ENCODE measurements at regions of chr9 and their contacts with region 1.

Region 1: DNA sequence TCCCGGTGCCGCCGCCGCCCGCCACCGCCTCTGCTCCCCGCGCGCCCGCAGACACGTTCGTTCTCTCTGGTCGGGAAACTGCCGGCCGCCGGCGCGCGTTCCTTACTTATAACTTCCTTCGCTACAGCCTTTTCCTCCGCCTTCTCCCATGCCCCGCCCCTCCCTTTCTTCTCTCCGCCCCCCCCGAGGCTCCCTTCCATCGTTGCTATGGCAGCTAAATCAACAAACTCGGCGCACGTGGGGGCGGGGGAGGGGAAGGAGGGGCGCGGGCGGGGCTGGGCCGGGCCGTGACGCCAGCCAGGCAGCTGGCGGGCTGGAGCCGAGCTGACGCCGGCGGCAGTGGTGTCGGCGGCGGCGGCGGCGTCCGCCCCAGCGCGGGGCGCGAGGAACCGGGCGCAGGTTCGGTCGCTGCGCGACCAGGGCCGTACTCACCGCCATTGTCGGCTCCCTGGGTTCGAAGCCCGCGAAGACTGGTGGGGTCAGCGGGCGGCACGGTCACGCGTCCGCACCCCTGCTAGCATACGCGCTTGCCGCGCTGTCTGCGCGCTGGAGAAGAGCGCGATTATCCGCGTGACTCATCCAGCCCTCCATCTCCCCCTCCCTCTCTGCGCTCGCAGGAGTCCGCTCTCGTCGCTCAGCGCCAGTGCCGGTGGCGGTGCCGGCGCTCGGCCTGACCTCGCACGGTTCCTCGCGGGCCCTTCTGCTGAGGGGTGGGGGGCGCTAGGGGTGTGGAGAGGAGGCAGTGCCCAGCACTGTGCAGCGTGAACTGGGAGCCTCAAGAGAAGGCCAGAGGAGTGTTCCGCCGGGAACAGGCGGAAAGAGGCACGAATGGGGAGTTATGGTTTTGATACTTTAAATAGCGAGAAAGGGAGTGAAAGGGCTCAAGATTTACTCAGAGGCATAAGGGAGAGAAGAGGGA is at the start of gene KLF4:
- DNase-seq: peak; percentile 90 to 94
- ATAC-seq: peak; percentile 76 to 94 (median 84)
- H3K4me3 ChIP-seq: peak within 1 kb of the TSS; percentile 60 to 94 (median 80)
- H3K27ac ChIP-seq: peak within 1 kb of the TSS; percentile 86 to 98 (median 96)
- H3K4me1 ChIP-seq: peaks cover 3 to 64% (median 19%) of the 10 kb centered on the region in 9 donors
- H3K27me3 ChIP-seq: peaks cover 0 to 48% (median 0%) of the 10 kb centered on the region in 7 donors
- CTCF ChIP-seq: peak in 1 of 9 donors; percentile 16
- total RNA-seq, gene KLF4: 16.7 to 62.2 (median 31.0) TPM

Region 2: DNA sequence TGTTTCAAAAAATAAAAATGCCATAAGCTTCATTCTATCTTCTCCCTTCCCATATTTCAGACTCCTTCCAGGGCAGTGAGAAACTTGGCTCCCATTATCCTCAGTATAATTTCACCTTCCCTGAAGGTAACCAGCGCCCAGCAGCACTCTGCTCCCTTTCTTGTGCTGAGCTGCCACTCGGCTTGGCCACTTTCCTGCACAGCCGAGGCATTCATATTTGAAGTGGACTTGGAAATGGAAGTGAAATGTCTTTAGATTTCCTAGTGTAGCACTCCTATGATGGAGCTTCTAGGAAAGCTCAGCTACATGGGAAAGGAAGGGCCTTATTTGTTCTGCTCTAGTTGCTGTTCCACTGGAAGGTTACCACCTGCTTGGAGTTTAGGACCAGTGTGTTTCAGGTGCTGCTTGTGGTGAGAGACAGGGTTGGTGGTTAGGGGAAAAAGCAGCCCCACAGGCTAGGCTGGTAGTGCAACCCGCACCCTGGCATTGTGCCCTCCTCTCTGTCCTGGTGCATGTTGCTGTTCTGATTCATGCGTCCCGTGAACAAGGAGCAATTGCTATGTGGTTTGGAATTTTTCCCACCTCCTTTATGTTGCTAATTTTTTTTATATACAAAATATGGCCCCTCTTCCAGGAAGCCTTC is 153.1 kb before region 1 on chr9:
- intact Hi-C with region 1: no loop called
- DNase-seq: no peak
- ATAC-seq: peak in 3 of 8 donors; percentile 17 to 48 (median 30)
- H3K4me3 ChIP-seq: no peak overlapping the region
- H3K27ac ChIP-seq: no peak overlapping the region
- H3K4me1 ChIP-seq: peaks cover 0 to 28% (median 15%) of the 10 kb centered on the region in 9 donors
- H3K27me3 ChIP-seq: no peaks in the 10 kb centered on the region
- CTCF ChIP-seq: no peak

Region 3: DNA sequence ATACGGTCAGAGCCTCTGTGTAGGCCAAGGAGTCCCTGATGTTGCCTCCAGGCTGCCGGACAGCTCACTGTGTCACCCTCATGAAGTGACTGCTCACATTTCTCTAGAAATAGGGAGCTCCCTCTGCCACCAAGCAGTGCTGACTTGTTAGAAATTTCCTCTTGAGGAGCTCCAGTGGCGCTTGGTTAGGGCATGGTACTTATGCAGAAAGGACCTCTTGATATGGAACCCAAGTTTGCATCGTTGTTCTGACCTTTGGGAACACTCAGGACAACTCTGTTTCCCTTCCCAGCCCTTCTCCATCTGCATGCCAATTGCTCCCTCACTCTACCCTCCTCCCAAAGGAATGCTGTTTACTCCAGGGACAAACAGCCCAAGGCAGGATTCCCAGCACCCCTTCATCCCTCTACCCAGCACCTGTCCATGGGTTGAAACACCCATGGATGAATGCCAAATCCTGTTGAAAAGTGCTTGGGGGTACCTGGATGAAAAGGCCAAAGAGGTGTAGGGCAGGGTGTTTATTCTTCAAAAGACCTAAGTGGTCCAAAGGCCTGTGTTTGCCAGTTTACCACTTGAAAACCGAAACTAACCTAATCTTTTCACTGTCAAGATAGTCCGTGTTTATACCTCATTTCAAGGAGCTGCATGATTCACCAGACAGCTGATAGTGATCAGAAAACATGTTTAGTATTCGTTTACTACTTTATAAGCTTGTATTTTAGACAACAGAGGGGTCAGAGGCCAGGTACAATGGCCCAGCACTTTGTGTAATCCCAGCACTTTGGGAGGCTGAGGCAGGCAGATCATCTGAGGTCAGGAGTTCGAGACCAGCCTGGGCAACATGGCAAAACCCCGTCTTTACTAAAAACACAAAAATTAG is 51.5 kb before region 1 on chr9:
- intact Hi-C with region 1: no loop called
- DNase-seq: no peak
- ATAC-seq: no peak
- H3K4me3 ChIP-seq: no peak overlapping the region
- H3K27ac ChIP-seq: no peak overlapping the region
- H3K4me1 ChIP-seq: no peaks in the 10 kb centered on the region
- H3K27me3 ChIP-seq: no peaks in the 10 kb centered on the region
- CTCF ChIP-seq: no peak

Region 4: GRCh38 chr9:107587191-107587963 is 97.4 kb after region 1 on chr9:
- intact Hi-C with region 1: loop called in 2 of 10 experiments (anchors 5 kb)
- DNase-seq: peak; percentile 60 to 82
- ATAC-seq: peak; percentile 75 to 95 (median 92)
- H3K4me3 ChIP-seq: peak overlapping the region in 7 of 10 donors; percentile 18 to 43 (median 41)
- H3K27ac ChIP-seq: peak overlapping the region; percentile 72 to 89 (median 81)
- H3K4me1 ChIP-seq: peaks cover 0 to 36% (median 12%) of the 10 kb centered on the region in 9 donors
- H3K27me3 ChIP-seq: no peaks in the 10 kb centered on the region
- CTCF ChIP-seq: no peak

Region 5: DNA sequence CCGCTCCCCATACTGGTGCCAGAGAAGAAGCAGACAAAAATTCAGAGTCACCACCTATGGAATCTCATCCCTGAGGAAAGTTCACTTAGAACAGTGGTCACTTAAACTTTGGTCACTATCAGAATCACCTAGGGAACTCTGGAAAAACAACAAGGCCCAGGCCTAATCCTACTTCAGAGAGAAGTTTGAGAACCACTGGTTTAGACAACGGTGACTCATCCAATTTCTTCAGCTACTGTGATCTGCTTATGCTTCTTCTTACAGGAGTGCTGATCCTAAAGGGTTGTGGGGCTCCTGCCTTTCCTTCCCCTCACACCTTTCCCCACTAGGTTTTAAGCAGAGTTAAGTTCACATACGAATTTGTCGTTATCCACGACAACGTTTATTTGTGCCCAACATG is 194.3 kb after region 1 on chr9:
- intact Hi-C with region 1: loop called in 1 of 10 experiments (anchors 5 kb)
- DNase-seq: no peak
- ATAC-seq: no peak
- H3K4me3 ChIP-seq: no peak overlapping the region
- H3K27ac ChIP-seq: peak overlapping the region in 4 of 10 donors; percentile 20 to 77 (median 48)
- H3K4me1 ChIP-seq: peaks cover 0 to 34% (median 0%) of the 10 kb centered on the region in 9 donors
- H3K27me3 ChIP-seq: no peaks in the 10 kb centered on the region
- CTCF ChIP-seq: no peak

Region 6: GRCh38 chr9:108053555-108054061 is 563.7 kb after region 1 on chr9:
- intact Hi-C with region 1: loop called in 2 of 10 experiments (anchors 10 kb)
- DNase-seq: peak; percentile 54 to 61
- ATAC-seq: peak; percentile 51 to 78 (median 66)
- H3K4me3 ChIP-seq: peak overlapping the region in 3 of 10 donors; percentile 8 to 10 (median 8)
- H3K27ac ChIP-seq: peak overlapping the region in 7 of 10 donors; percentile 30 to 54 (median 46)
- H3K4me1 ChIP-seq: peaks cover 5 to 55% (median 15%) of the 10 kb centered on the region in 9 donors
- H3K27me3 ChIP-seq: peaks cover 0 to 6% (median 0%) of the 10 kb centered on the region in 7 donors
- CTCF ChIP-seq: no peak

Region 7: DNA sequence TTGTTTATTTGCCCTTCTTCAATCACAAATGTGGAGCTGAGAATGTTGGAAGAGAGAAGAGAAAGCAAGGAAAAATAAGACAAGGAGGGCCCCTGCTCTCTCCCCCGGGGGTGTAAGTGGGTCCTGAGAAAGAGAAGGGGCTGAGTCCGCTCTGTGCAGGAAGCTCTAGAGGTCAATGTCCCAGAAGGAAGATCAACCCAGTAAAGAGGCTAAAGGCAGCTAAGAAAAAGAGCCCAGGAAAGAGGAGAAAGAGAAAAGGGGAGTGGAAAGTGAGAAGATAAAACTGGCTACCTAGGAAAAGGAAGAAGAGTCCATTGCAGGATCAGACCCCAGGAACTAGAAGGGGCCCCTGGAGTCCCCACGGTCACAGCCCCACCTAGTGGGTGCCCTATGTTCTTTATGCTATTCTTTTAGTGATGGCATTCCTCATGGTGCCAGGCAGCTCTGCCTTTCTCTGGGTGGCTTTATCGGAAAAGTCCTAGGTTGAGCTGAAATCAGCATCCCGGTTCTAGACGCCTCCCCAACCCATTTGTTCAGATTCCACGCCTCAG is 782.5 kb after region 1 on chr9:
- intact Hi-C with region 1: loop called in 3 of 10 experiments (anchors 5 kb)
- DNase-seq: peak; percentile 43 to 46
- ATAC-seq: peak; percentile 69 to 93 (median 86)
- H3K4me3 ChIP-seq: peak overlapping the region in 6 of 10 donors; percentile 1 to 42 (median 24)
- H3K27ac ChIP-seq: peak overlapping the region in 7 of 10 donors; percentile 10 to 71 (median 52)
- H3K4me1 ChIP-seq: peaks cover 0 to 23% (median 8%) of the 10 kb centered on the region in 9 donors
- H3K27me3 ChIP-seq: no peaks in the 10 kb centered on the region
- CTCF ChIP-seq: peak; percentile 49 to 76 (median 65)